ENCODE measurements at regions of chr1 and their contacts with region 1.

Region 1: DNA sequence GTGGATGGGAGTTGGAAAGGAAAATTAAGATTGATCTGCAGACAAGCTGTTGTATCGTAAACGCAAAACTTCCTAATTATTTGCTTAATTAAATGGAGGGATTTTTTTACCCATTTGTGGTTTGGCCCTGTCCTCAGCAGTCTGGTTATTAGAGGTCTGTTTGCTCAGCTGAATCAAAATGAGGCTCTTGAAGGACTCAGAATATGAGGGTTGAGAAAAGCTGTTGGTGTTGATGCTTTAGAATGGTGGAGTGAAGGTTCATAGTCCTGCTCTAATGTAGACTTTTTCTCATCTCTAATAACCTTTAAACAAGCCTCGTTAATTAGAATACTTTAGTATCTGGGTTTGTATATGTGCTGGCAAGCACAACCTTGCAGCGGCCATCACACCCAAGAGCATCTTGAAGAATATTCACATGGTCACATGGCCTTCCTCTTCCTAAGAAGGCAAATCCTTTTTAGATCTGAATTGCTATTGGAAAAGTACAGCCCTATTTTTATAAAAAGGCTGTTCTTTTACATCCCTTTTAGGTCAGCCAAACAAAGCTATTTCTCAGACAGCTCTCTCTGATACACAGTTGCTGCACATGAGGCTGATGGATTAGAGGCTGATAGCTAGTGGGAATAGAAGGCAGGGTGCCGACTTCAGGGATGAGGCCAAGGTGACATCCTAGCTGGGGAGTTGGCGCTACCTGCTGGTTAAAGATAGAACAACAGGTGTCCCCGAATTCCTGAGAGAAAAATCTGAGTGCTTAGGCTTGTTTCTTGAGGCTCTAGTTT is 53.8 kb downstream of the MACF1 start:
- DNase-seq: peak in 1 of 2 donors; percentile 71
- ATAC-seq: peak; percentile 85

Region 2: DNA sequence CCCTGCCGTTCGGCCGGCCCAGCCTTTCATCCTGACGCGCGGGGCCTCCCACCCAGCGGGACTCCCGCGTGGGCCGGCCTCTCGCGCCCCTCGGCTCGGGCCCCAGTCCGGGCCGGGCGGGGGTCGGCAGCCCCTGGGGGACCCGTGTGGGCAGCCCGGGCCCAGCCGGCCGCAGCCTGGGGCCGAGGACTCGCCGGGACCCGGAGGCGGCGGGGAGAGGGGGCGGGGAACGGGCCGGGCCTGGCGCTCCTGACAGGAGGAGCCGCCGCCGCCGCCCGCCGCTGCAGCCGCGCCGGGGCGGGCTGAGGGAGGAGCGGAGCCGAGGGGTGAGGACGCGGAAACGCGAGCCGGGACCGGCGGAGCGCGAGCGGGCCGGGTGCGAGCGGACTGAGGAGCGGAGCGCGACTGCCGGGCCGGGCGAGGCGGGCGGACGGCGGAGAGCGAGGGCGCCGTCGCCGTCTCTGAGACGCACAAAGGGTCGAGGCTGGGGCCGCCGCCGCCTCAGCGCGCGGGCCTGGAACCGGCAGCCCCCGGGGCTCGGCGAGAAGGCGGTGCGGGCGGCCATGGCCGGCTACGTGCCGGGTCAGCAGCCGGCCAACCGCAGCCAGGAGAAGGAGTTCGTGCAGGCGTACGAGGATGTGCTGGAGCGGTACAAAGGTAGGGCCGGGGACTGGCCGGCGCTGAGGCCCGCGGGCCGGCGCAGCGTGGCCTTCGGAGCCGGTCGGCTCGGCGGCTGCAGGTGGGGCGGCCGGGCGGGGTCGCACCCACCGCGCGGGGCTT is 153.1 kb before region 1 on chr1:
- intact Hi-C with region 1: loop called in 1 of 2 experiments (anchors 5 kb)
- DNase-seq: peak; percentile 76 to 86
- ATAC-seq: peak; percentile 87

Region 3: DNA sequence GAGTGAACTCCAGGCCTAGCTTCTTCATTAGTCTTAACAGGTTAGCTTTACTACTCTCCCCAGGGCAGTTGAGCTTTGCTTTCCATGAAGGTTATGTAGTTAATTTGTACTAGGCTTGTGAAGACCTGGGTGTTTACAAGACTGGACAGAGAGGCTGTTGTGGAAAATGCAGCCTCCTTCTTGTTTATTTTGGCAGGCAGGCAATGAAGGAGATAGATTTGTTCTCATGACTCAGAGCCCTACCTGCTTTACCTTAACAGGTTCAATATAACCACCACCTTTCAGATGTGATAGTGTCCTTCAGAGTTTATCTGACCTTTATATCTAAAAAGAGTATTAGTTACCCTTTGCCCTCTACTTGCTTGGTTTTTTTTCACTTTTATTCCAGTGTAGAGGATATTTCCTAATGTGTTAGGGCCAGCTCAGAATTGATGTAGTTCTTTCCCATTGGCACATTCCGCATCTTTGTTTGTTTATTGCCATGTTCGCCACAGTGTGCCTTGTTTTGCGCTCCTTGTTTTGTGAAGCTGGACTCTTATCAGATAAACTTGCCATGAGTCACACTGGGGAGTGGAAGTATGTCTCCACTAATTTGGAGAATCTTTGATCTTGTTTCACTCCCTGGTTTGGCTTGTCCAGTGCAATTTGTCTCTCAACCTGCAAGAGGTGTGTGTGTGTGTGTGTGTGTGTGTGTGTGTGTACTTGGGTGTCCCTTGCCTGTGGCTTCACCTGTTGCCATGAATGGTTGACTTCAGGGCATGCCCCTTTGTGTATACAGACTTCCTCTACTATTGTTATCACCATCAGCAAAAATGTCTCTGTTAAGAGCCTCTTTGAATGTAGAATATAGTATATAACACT is 141.2 kb before region 1 on chr1:
- intact Hi-C with region 1: no loop called
- DNase-seq: no peak
- ATAC-seq: peak; percentile 70

Region 4: DNA sequence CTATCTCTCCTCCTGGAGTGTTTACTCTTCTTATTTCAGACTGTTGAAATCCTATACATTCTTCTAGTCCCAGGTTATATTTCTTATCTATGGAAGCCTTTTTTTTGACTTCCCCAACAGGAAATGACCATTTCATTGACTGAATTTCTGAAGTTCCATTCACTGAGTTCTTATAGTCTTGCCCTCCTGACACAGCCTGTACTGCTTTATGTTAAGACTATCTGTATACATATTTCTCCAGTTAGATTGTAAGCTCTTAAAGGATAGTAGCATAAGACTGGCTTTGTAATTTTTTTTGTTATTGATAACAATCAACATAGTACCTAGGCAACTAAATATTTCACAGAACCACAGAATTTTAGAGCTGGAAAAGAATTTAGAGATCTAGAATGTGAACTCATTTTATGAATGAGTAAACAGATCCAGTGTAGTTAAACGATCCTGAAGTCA is 68.7 kb before region 1 on chr1:
- intact Hi-C with region 1: loop called (anchors 5 to 10 kb)
- DNase-seq: no peak
- ATAC-seq: no peak

Region 5: DNA sequence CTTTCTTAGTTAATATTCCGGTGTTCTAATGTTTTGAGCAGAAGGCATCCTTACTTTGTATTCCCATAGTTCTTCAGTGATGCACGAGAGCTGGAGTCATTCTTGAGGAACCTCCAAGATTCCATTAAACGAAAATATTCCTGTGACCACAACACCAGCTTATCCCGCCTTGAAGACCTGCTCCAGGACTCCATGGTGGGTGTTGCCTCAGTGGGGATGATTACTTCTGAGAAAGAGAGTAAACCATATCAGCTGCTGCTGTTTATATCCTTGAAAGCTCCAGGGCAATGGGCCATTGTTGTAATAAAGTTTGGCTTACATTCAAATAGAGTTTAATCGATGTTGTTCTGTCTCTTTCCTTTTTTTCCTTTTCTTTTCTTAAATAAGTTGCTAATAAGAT is 39.2 kb after region 1 on chr1:
- intact Hi-C with region 1: no loop called
- DNase-seq: no peak
- ATAC-seq: no peak

Measured in left colon (tissue), 2 donors.